Panc1 (cell line): ENCODE measurements at regions of chr12 and their contacts with region 1.

Region 1: DNA sequence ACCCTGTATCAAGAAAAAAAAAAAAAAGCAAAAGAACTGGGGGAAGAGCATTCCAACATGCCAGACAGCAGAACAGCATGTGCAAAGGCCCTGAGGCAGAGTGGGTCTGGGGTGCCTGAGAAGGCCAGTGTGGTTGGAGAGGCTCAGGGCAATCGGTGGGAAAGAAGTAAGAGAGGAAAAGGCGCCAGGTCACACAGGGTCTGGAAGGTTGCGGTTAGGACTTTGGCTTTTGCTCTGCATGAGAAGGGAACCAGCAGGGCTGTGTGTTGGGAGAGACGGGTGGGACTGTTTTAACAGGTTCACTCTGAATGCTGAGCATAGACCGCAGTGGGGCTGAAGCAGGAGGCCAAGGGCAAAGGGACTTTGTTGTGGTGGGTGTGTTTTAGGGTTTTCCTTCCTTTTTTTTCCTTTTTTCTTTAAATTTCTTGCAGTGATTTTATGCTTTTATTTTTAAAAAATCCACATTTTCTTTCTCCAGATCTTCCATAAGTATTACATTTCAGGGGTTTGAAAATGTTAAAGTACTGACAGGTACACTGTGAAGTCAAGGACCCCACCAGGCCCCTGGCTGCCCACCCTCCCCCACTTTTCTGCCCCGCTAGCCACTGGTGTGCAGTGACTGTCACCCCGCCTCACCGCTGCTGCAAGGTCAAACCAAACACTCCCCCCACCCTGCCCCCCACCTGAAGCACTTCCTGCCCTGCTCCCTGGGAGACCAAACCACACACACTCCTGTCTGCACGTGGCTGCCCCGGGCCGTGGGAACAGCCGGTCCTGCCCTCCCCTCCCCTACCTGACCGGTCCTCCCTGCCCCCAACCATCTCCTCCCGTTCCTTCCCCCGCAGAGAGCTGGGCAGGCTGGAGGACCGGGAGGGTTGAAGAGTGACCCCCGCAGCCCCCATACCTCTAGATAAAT is 30.0 kb downstream of the DTX1 start:
- DNase-seq: no peak
- ATAC-seq: no peak
- H3K4me3 ChIP-seq: no peak overlapping the region
- H3K27ac ChIP-seq: no peak overlapping the region
- H3K4me1 ChIP-seq: no peaks in the 10 kb centered on the region
- H3K27me3 ChIP-seq: no peaks in the 10 kb centered on the region
- CTCF ChIP-seq: no peak

Region 2: DNA sequence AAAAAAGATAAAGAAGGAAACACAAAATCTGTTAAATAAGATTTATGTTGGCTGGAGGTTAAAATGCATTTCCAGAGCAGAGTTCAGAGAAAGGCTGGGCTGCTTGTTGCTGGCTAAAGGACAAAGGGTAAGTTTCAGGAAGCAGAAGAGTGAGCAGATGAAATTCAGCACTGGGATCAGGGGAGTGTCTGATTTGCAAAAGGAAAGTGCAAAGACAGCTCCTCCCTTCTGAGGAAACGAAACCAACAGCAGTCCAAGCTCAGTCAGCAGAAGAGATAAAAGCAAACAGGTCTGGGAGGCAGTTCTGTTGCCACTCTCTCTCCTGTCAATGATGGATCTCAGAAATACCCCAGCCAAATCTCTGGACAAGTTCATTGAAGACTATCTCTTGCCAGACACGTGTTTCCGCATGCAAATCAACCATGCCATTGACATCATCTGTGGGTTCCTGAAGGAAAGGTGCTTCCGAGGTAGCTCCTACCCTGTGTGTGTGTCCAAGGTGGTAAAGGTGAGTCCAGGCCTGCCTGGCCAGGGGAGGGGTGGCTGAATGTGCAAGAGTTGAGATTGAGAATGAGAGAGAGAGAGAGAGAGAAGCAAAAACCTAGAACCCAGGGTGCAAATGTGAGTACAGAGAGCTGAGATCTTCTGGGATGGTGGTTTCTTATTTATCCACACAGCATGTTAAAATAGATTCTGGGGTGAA is 179.6 kb before region 1 on chr12 and contains the start of gene OAS1:
- CTCF ChIA-PET with region 1: no interaction called
- POLR2A ChIA-PET with region 1: no interaction called
- in situ Hi-C with region 1: no loop called
- intact Hi-C with region 1: no loop called
- DNase-seq: no peak
- ATAC-seq: peak; percentile 84
- H3K4me3 ChIP-seq: peak within 1 kb of the TSS; percentile 29 to 45
- H3K27ac ChIP-seq: 0 out of 2 replicates have a peak within 1 kb of the TSS, but pooled peaks have one; percentile 30
- H3K4me1 ChIP-seq: no peaks in the 10 kb centered on the region; the same call in 1 of the 2 replicates
- H3K27me3 ChIP-seq: no peaks in the 10 kb centered on the region; the same call in 1 of the 2 replicates
- CTCF ChIP-seq: no peak
- total RNA-seq, gene OAS1: 4.5 TPM

Region 3: DNA sequence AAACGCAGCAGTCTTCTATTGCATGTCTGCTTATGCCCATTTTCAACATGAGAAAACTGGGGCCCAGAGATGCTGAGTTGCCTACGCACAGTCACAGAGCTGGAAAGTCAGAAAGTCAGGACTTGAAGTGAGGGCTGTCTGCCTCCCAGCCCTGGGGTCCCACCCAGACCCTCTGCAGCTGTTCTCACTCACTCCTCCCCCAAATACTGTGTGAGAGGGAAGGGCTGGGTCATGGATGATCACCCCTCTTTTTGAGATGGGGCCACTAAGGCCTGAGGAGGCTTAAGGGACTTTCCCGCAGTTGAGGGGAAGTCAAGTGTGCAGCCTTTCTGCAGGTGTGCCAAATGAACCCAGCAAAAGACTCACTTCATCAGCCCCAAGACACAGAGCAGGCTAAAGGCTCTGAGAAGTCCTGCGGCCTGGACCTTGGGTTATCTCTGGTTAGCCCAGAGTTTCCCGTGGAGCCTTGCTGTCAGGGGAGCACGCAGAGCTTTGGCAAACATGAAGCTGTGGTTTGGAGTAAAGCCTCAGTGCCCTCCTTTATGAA is 11.3 kb before region 1 on chr12:
- CTCF ChIA-PET with region 1: no interaction called
- POLR2A ChIA-PET with region 1: no interaction called
- in situ Hi-C with region 1: no loop called
- intact Hi-C with region 1: no loop called
- DNase-seq: no peak
- ATAC-seq: no peak
- H3K4me3 ChIP-seq: no peak overlapping the region
- H3K27ac ChIP-seq: no peak overlapping the region
- H3K4me1 ChIP-seq: 0 out of 2 replicates have a peak, but pooled peaks cover 4% of the 10 kb centered on the region
- H3K27me3 ChIP-seq: no peaks in the 10 kb centered on the region
- CTCF ChIP-seq: no peak

Region 4: DNA sequence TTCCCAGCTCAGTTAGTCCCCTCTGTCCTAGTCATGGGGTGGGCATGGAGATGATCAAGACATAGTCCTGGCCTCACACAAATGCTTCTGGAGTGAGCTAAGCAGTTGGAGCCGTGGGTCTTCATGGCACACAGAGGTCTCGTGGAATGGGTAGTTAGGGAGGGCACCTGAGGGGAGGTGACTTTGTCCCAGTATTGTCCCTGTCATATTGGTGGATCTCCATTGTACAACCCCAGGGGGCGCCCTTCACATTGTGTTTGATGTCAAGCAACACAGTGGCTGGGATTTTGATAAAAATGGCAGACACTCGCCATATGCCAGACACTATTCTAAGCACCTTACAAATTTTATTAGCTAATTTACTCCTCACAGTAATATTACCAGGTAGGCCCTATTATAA is 560.5 kb after region 1 on chr12:
- CTCF ChIA-PET with region 1: no interaction called
- POLR2A ChIA-PET with region 1: interaction called, 12 read pairs
- in situ Hi-C with region 1: no loop called
- intact Hi-C with region 1: no loop called
- DNase-seq: peak; percentile 1
- ATAC-seq: no peak
- H3K4me3 ChIP-seq: no peak overlapping the region
- H3K27ac ChIP-seq: no peak overlapping the region
- H3K4me1 ChIP-seq: no peaks in the 10 kb centered on the region
- H3K27me3 ChIP-seq: peaks cover 5% of the 10 kb centered on the region
- CTCF ChIP-seq: no peak; the same call in 1 of the 2 replicates